PC-3 (cell line): ENCODE measurements at regions of chr3 and their contacts with region 1.

Region 1: GRCh38 chr3:109413049-109413448 is 75.7 kb upstream of the DPPA4 start:
- DNase-seq: peak; percentile 29
- ATAC-seq: peak; percentile 59; the same call in 1 of the 2 replicates
- H3K4me3 ChIP-seq: no peak overlapping the region
- H3K27ac ChIP-seq: no peak overlapping the region
- H3K4me1 ChIP-seq: no peaks in the 10 kb centered on the region
- H3K27me3 ChIP-seq: peaks cover 2% of the 10 kb centered on the region; the same call in 1 of the 2 replicates
- CTCF ChIP-seq: no peak

Region 2: DNA sequence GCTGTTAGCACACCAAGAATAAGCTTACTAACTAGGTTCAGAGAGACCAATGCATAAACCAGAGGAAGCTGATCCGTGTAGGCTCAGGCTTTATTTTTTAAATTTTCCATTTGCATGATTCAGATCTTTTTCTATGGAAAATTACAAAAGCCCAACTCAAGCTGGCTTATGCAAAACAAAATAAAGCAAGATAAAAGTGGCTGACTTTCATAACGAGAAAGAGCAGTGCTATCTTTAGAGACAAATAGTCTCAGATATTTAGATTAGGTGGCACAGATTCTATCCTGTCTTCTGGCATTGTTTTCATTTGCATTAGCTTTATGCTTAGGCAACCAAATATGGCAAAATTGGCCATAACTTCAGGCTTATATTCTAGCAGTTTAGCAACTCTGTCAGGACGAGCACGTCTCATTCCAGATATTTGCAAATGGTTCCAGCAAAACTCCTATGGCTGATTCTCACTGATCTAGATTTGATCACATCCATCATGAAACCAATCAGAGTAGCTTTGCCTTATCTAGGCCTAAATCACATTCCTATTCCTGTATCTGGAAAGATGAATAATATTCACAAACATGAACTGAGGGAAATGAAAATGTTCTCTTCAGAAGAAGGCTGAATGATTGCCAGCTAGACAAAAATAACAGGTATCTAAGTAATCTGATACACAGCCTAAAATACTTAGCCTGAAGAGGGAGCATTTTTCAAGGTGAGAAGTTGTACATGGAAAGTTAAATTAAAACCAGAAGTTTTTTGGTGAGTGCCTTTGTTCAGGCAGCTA is 140.7 kb after region 1 on chr3:
- CTCF ChIA-PET with region 1: no interaction called
- POLR2A ChIA-PET with region 1: interaction called, 12 read pairs
- intact Hi-C with region 1: no loop called
- DNase-seq: peak; percentile 59
- ATAC-seq: peak; percentile 75
- H3K4me3 ChIP-seq: no peak overlapping the region
- H3K27ac ChIP-seq: no peak overlapping the region
- H3K4me1 ChIP-seq: peaks cover 6% of the 10 kb centered on the region; the same call in 1 of the 2 replicates
- H3K27me3 ChIP-seq: no peaks in the 10 kb centered on the region
- CTCF ChIP-seq: peak; percentile 63